ENCODE measurements at regions of chr17 and their contacts with region 1.

Region 1: GRCh38 chr17:40909351-40909750 is 24.3 kb upstream of the KRT20 start:
- DNase-seq: peak; percentile 56
- H3K4me3 ChIP-seq: no peak overlapping the region
- H3K27ac ChIP-seq: no peak overlapping the region
- H3K4me1 ChIP-seq: no peaks in the 10 kb centered on the region
- CTCF ChIP-seq: peak; percentile 86

Region 2: GRCh38 chr17:40622509-40622928 is 286.8 kb before region 1 on chr17:
- CTCF ChIA-PET with region 1: no interaction called
- POLR2A ChIA-PET with region 1: no interaction called
- intact Hi-C with region 1: loop called (anchors 5 kb)
- DNase-seq: no peak
- H3K4me3 ChIP-seq: no peak overlapping the region
- H3K27ac ChIP-seq: no peak overlapping the region
- H3K4me1 ChIP-seq: peaks cover 41% of the 10 kb centered on the region
- CTCF ChIP-seq: no peak

Region 3: GRCh38 chr17:40803617-40804082 is 105.7 kb before region 1 on chr17:
- CTCF ChIA-PET with region 1: no interaction called
- POLR2A ChIA-PET with region 1: no interaction called
- intact Hi-C with region 1: loop called (anchors 5 kb)
- DNase-seq: peak; percentile 62
- H3K4me3 ChIP-seq: no peak overlapping the region
- H3K27ac ChIP-seq: no peak overlapping the region
- H3K4me1 ChIP-seq: no peaks in the 10 kb centered on the region
- CTCF ChIP-seq: peak; percentile 93

Region 4: DNA sequence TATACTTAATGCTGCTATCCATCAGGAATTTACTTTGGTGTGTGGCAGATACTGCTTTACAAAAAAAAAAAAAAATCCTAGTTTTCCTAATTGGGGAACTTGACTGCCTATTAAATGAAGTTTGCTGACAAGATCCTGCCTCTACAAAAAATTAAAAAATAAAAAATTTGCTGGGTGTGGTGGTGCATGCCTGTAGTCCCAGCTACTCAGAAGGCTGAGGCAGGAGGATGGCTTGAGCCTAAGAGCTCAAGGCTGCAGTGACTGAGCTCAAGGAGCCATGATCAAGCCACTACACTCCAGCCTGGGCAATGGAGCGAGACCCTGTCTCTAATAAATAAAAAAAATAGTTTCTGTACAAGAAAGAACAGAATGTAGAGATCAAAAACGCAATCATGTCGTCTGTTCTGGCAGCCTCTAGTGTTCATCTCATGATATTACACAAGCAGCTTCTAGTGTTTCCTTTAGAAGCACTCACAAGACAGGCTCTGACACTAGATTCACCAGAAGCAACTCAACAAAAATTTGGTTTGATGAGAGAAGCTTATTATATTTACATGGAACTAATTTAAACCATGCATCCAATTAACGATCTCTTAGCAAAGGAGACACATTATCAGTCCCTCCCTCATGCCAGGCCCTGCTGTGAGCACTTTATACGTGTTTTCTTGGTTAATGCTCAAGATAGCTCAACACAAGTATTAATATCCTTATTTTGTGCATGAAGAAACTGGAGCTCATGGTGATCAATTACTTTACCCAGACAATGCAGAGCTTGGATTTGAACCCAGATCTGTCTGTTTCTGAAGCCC is 412.9 kb after region 1 on chr17:
- CTCF ChIA-PET with region 1: no interaction called
- POLR2A ChIA-PET with region 1: no interaction called
- intact Hi-C with region 1: loop called (anchors 2 kb)
- DNase-seq: peak; percentile 46
- H3K4me3 ChIP-seq: no peak overlapping the region
- H3K27ac ChIP-seq: no peak overlapping the region
- H3K4me1 ChIP-seq: no peaks in the 10 kb centered on the region
- CTCF ChIP-seq: peak; percentile 80

Region 5: GRCh38 chr17:41548844-41549595 is 639.7 kb after region 1 on chr17:
- CTCF ChIA-PET with region 1: no interaction called
- POLR2A ChIA-PET with region 1: no interaction called
- intact Hi-C with region 1: loop called (anchors 2 kb)
- DNase-seq: peak; percentile 75
- H3K4me3 ChIP-seq: no peak overlapping the region
- H3K27ac ChIP-seq: no peak overlapping the region
- H3K4me1 ChIP-seq: no peaks in the 10 kb centered on the region
- CTCF ChIP-seq: peak; percentile 96

Region 6: DNA sequence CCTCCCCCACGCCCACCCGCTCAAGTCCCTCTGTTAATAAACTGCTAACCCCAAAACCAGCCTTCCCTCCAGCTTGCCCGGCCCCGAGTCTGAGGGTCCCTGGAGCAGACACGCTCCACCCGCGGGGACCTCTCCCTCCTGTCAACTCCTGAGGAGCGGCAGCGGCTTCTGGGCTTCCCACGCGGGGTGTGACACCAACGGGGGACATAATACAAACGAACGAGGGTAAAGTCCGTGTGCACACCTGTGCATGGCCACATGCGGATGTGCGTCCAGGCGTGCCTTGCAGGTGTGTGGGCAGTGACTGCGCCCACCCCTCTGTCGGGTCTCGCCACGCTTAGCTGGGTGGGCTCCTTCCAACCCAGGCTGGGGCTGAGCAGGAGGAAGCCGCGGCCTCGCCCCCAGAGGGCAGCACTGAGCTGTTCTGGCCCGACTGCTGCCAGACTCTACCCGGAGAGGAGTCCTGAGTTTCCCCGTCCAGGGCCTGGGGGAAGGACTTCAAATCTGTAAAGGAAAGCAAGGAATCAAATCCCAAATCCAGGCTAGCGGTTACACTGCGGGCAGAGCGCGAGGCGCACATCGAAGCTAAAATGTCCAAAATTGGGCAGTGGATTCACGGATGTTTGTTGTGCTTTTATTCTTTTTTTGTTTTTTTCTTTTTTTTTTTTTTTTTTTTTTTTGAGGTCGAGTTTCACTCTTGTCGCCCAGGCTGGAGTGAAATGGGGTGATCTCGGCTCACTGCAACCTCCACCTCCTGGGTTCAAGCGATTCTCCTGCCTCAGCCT is 739.3 kb after region 1 on chr17:
- CTCF ChIA-PET with region 1: no interaction called
- POLR2A ChIA-PET with region 1: no interaction called
- intact Hi-C with region 1: loop called (anchors 5 kb)
- DNase-seq: peak; percentile 88
- H3K4me3 ChIP-seq: peak overlapping the region; percentile 60
- H3K27ac ChIP-seq: no peak overlapping the region
- H3K4me1 ChIP-seq: peaks cover 10% of the 10 kb centered on the region
- CTCF ChIP-seq: peak; percentile 90

Measured in OCI-LY7 (cell line).